Activated B cell treated with CpG ODN at 0.5 μM for 24 hours (primary cell): ENCODE measurements at regions of chr11 and their contacts with region 1.

Region 1: GRCh38 chr11:95592471-95592870 is 197.1 kb downstream of the FAM76B start:
- DNase-seq: no peak
- ATAC-seq: no peak
- H3K4me3 Mint-ChIP-seq: no peak overlapping the region
- H3K27ac Mint-ChIP-seq: no peak overlapping the region
- H3K4me1 Mint-ChIP-seq: no peaks in the 10 kb centered on the region
- H3K27me3 Mint-ChIP-seq: no peaks in the 10 kb centered on the region
- CTCF ChIP-seq: no peak

Region 2: DNA sequence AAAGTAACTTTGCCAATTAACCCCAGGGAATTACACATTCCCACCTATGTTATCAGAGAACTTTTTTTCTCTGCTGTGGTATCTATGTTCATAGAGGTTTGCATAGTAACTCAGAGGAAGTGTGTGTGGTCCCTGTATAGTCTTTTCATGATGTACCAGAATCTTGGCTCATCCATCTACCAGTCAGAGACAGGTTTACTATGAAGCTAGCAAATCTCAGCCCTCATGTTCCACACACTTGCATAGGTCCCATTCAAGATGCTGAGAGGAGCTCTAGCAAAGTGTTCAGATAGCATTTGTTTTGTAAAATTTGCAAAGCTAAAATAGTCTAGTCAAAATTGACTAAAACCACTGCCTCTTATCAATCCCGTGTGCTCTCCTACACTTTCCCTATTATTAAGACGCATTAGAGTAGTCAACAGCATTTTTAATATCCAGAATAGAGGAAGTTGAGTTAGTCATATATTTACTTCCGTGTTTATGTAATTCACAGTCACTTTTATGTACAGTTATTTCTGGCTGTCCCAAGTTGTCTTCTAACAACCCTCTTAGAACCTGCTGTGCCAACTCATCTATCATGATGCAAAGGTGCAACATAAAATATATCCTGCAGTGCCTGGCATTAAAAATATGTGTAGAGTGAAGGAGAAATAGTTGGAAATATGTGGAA is 12.9 kb after region 1 on chr11:
- CTCF ChIA-PET with region 1: interaction called, 3 read pairs
- POLR2A ChIA-PET with region 1: no interaction called
- intact Hi-C with region 1: loop called (anchors 1 kb)
- DNase-seq: no peak
- ATAC-seq: peak; percentile 64
- H3K4me3 Mint-ChIP-seq: no peak overlapping the region
- H3K27ac Mint-ChIP-seq: peak overlapping the region; percentile 6
- H3K4me1 Mint-ChIP-seq: peaks cover 20% of the 10 kb centered on the region
- H3K27me3 Mint-ChIP-seq: no peaks in the 10 kb centered on the region
- CTCF ChIP-seq: no peak